Mammary epithelial cell (primary cell): ENCODE measurements at regions of chr9 and their contacts with region 1.

Region 1: DNA sequence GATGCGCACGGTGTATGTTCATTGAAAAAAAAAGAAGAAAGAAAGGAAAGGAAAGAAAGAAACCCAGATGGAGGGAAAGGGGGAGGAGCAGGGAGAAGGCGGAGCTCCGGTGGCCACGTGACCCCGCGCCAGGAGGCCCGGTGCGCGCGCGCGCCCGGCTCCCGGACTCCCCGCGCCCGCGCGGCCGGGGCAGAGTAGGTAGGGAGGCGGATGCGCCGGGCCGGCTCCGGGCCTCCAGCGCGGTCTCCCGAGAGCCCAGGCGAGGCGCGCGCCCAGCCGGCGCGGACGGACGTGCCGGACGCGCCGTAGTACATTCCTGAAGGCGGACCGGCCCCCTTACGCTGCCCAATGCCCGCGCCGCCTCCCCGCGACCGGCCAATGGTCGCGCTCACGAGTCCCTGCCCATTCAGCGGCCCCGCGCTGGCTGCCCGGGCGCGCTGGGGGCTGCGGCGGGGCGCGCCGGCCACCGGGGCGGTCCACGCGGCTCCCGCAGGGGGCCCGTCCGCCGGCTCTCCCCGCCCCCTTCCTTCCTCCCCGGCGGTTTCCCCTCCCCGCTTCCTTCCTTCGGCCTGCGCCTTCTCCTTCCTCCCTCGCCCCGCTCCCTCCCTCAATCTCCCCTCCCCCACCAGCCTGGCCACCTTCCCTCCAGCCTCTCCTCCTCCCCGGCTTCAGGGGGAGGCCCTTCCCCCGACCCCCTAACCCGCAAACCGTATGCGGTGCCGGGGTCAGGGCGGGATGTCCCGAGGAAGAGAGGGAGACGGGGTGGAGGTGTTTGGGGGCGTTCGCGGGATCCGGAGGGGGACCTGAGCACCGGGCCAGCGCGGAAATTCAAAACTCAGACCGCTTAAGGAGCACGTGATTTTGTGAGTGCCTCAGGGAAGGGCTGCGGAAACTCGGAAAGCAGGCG is 5.8 kb downstream of the PTCH1 start:
- DNase-seq: peak; percentile 96
- H3K4me3 ChIP-seq: peak overlapping the region; percentile 83 to 95 (median 89)
- H3K27ac ChIP-seq: peak overlapping the region; percentile 60
- H3K4me1 ChIP-seq: peaks cover 20% of the 10 kb centered on the region
- H3K27me3 ChIP-seq: no peaks in the 10 kb centered on the region
- CTCF ChIP-seq: no peak

Region 2: DNA sequence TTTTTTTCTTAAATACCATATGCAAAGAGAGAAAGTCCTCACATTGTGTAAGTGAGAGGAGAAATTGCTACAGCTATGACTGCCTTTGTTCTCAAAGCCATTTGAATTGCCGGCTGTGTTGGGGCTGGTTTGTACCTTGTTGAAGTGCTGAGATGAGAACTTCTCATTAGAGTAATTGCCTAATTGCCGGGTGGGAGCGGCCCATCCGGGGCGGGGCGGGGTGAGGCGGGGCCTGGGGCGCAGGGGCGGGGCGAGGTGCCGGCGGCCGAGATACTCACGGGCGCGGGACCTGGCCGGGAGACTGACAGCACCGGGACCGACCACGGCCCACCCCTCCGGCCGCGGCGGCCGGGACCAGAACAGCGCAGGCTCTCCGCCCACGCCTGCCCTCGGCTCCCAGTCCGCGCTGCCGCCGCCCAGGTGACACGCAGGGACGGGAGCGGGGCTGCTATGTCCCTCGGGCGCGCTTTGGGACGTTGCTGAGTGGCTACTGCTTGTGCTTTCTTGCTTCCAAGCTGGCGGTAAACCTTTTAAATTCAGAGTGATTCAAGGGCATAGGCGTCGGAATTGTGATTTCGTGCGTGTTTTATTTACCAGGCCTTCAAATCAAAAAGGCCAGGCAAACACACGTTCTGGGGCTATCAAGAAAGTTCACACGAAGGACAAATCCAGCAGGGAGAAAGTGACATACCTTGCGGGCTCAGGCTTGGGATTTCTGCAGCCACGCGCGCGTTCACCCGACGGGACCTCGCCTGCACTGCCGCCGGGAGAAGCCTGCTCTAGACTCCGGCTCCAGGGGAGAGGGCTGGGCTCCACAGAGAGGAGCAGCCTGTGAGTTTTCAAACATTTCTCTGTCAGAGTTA is 462.5 kb before region 1 on chr9:
- CTCF ChIA-PET with region 1: no interaction called
- dilution Hi-C with region 1: no loop called
- in situ Hi-C with region 1: no loop called
- intact Hi-C with region 1: no loop called
- DNase-seq: peak; percentile 83
- H3K4me3 ChIP-seq: peak overlapping the region; percentile 61 to 66 (median 65)
- H3K27ac ChIP-seq: peak overlapping the region; percentile 78
- H3K4me1 ChIP-seq: peaks cover 15% of the 10 kb centered on the region
- H3K27me3 ChIP-seq: no peaks in the 10 kb centered on the region
- CTCF ChIP-seq: no peak

Region 3: DNA sequence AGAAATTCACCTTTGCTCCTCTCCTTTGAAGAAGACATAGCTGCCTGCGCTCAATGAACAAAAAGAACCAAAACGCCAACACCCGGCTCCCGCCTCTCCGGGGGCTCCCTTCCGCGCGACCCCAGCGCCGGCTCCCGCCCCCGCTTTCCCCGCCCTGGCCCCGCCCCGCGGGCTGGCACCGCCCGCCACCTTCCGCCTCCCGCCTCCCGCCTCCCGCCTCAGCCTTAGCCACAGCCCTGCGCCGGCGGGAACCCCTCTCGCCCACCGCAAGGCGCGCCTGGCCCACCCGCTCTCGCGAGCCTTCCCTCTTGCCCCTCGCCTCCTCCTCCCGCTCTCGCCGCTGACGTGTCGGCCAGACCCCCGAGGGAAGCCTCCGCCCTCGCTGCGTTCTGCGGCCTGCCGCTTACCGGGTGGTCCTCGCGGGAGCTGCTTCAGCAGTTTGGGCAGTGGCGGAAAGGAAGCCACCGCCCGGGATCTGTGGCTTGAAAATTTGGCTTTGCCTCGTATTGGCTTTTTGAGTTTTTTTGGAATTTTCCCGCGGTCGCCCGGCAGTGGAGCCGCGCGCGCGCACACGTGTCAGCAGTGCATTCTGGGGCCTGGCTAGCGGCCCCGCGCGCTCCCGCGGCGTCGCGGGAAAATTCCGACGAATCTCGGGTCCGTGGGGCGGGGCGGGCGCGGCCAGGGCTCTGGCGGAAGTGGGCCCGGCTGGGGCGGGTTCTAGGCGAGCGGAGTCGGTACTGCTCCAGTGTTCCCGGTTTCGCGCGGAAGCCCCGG is 193.7 kb before region 1 on chr9 and contains the start of gene FANCC:
- CTCF ChIA-PET with region 1: no interaction called
- dilution Hi-C with region 1: no loop called
- in situ Hi-C with region 1: loop called in 1 of 2 experiments (anchors 25 kb)
- intact Hi-C with region 1: loop called (anchors 1 kb)
- DNase-seq: peak; percentile 81
- H3K4me3 ChIP-seq: peak within 1 kb of the TSS; percentile 94 to 100 (median 95)
- H3K27ac ChIP-seq: peak within 1 kb of the TSS; percentile 94
- H3K4me1 ChIP-seq: peaks cover 22% of the 10 kb centered on the region
- H3K27me3 ChIP-seq: no peaks in the 10 kb centered on the region
- CTCF ChIP-seq: no peak
- total RNA-seq, gene FANCC: 4.2 to 12.9 TPM

Region 4: GRCh38 chr9:95425910-95426551 is 84.9 kb before region 1 on chr9:
- CTCF ChIA-PET with region 1: no interaction called
- dilution Hi-C with region 1: no loop called
- in situ Hi-C with region 1: loop called in 1 of 2 experiments (anchors 10 kb)
- intact Hi-C with region 1: loop called (anchors 1 kb)
- DNase-seq: peak; percentile 48
- H3K4me3 ChIP-seq: peak overlapping the region; percentile 48 to 62 (median 58)
- H3K27ac ChIP-seq: peak overlapping the region; percentile 55
- H3K4me1 ChIP-seq: no peaks in the 10 kb centered on the region
- H3K27me3 ChIP-seq: no peaks in the 10 kb centered on the region
- CTCF ChIP-seq: no peak

Region 5: GRCh38 chr9:95875305-95876137 is 364.6 kb after region 1 on chr9 and contains the start of gene ERCC6L2:
- CTCF ChIA-PET with region 1: no interaction called
- dilution Hi-C with region 1: no loop called
- in situ Hi-C with region 1: loop called in 1 of 2 experiments (anchors 25 kb)
- intact Hi-C with region 1: loop called (anchors 5 kb)
- DNase-seq: peak; percentile 97
- H3K4me3 ChIP-seq: no peak within 1 kb of the TSS
- H3K27ac ChIP-seq: no peak within 1 kb of the TSS
- H3K4me1 ChIP-seq: peaks cover 4% of the 10 kb centered on the region
- H3K27me3 ChIP-seq: no peaks in the 10 kb centered on the region
- CTCF ChIP-seq: no peak
- total RNA-seq, gene ERCC6L2: 28.9 to 73.5 TPM

Region 6: GRCh38 chr9:96418074-96418809 is 907.3 kb after region 1 on chr9 and contains the start of gene ZNF367:
- CTCF ChIA-PET with region 1: no interaction called
- dilution Hi-C with region 1: no loop called
- in situ Hi-C with region 1: no loop called
- intact Hi-C with region 1: loop called (anchors 5 kb)
- DNase-seq: peak; percentile 99
- H3K4me3 ChIP-seq: peak within 1 kb of the TSS; percentile 62 to 95 (median 83)
- H3K27ac ChIP-seq: peak within 1 kb of the TSS; percentile 90
- H3K4me1 ChIP-seq: peaks cover 18% of the 10 kb centered on the region
- H3K27me3 ChIP-seq: no peaks in the 10 kb centered on the region
- CTCF ChIP-seq: no peak
- total RNA-seq, gene ZNF367: 1.5 to 7.9 TPM